ENCODE measurements at regions of chr6 and their contacts with region 1.

Region 1: DNA sequence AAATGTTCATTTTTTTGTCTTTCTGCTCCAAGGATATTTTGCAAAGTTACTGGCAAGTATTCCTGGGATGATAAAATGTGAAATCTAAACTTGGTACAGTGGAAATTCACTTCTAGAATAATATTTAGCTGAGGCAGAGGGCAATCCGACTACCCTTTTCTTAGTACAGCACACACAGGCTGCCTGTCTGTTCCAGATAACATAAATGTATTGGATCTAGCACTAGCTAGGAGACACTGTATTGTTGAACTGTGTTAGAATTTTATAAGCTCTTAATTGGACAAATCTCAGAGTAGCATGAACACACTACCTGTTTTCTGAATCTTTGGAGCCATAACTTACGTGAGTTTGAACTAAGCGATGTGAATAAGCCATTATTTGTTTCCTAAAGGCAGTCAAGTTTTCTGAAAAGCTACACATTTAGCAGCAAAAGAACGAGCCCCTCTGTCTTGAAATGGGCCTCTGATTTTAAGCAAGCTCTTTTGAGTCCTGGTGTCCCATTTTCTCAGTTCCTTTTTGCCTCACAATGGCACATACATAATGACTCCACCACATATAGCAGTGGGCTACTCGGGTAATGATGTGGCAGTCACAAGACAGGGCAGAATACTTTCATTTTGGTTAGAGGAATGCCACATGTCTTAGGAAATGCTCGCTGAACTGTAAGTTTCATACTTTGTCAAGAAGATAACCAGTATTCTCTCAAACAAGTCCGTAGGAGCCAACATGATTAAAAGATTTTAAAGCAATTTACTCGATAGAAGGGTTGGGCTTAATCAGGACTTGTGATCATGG is 116.5 kb upstream of the ESR1 start:
- DNase-seq: peak in 4 of 5 donors; percentile 33 to 48 (median 36)
- H3K4me3 ChIP-seq: peak overlapping the region; percentile 24 to 46
- H3K4me3 Mint-ChIP-seq: peak overlapping the region; percentile 74 to 89 (median 86)
- H3K27ac ChIP-seq: peak overlapping the region; percentile 37
- H3K27ac Mint-ChIP-seq: peak overlapping the region; percentile 76 to 90 (median 81)
- H3K4me1 ChIP-seq: peaks cover 11% of the 10 kb centered on the region
- H3K4me1 Mint-ChIP-seq: peaks cover 9 to 27% (median 24%) of the 10 kb centered on the region in 4 donors
- H3K27me3 ChIP-seq: no peaks in the 10 kb centered on the region
- H3K27me3 Mint-ChIP-seq: no peaks in the 10 kb centered on the region

Region 2: GRCh38 chr6:151647976-151648639 is 42.9 kb before region 1 on chr6:
- CTCF ChIA-PET with region 1: no interaction called
- POLR2A ChIA-PET with region 1: no interaction called
- intact Hi-C with region 1: no loop called
- DNase-seq: no peak
- H3K4me3 ChIP-seq: no peak overlapping the region
- H3K4me3 Mint-ChIP-seq: no peak overlapping the region
- H3K27ac ChIP-seq: no peak overlapping the region
- H3K27ac Mint-ChIP-seq: no peak overlapping the region
- H3K4me1 ChIP-seq: no peaks in the 10 kb centered on the region
- H3K4me1 Mint-ChIP-seq: no peaks in the 10 kb centered on the region
- H3K27me3 ChIP-seq: no peaks in the 10 kb centered on the region
- H3K27me3 Mint-ChIP-seq: peaks cover 38 to 40% of the 10 kb centered on the region in 2 donors

Region 3: GRCh38 chr6:151702851-151703611 is 12.1 kb after region 1 on chr6:
- CTCF ChIA-PET with region 1: interaction called, 17 read pairs
- POLR2A ChIA-PET with region 1: interaction called, 14 read pairs
- intact Hi-C with region 1: no loop called
- DNase-seq: no peak
- H3K4me3 ChIP-seq: no peak overlapping the region
- H3K4me3 Mint-ChIP-seq: peak overlapping the region in 6 of 8 donors; percentile 4 to 49 (median 31)
- H3K27ac ChIP-seq: no peak overlapping the region
- H3K27ac Mint-ChIP-seq: peak overlapping the region; percentile 33 to 83 (median 58)
- H3K4me1 ChIP-seq: peaks cover 28% of the 10 kb centered on the region
- H3K4me1 Mint-ChIP-seq: peaks cover 21 to 36% (median 29%) of the 10 kb centered on the region in 4 donors
- H3K27me3 ChIP-seq: no peaks in the 10 kb centered on the region
- H3K27me3 Mint-ChIP-seq: no peaks in the 10 kb centered on the region

Region 4: GRCh38 chr6:151757506-151758245 is 66.7 kb after region 1 on chr6:
- CTCF ChIA-PET with region 1: interaction called, 3 read pairs
- POLR2A ChIA-PET with region 1: no interaction called
- intact Hi-C with region 1: loop called (anchors 2 kb)
- DNase-seq: peak in 3 of 5 donors; percentile 3 to 24 (median 13)
- H3K4me3 ChIP-seq: no peak overlapping the region
- H3K4me3 Mint-ChIP-seq: peak overlapping the region in 6 of 8 donors; percentile 15 to 75 (median 32)
- H3K27ac ChIP-seq: peak overlapping the region; percentile 45
- H3K27ac Mint-ChIP-seq: peak overlapping the region; percentile 48 to 90 (median 78)
- H3K4me1 ChIP-seq: peaks cover 20% of the 10 kb centered on the region
- H3K4me1 Mint-ChIP-seq: peaks cover 14 to 36% (median 23%) of the 10 kb centered on the region in 4 donors
- H3K27me3 ChIP-seq: no peaks in the 10 kb centered on the region
- H3K27me3 Mint-ChIP-seq: no peaks in the 10 kb centered on the region

Region 5: GRCh38 chr6:152124429-152125074 is 433.6 kb after region 1 on chr6:
- CTCF ChIA-PET with region 1: interaction called, 54 read pairs
- POLR2A ChIA-PET with region 1: interaction called, 4 read pairs
- intact Hi-C with region 1: loop called (anchors 1 kb)
- DNase-seq: peak in 4 of 5 donors; percentile 18 to 35 (median 29)
- H3K4me3 ChIP-seq: no peak overlapping the region
- H3K4me3 Mint-ChIP-seq: no peak overlapping the region
- H3K27ac ChIP-seq: no peak overlapping the region
- H3K27ac Mint-ChIP-seq: peak overlapping the region in 4 of 7 donors; percentile 22 to 67 (median 52)
- H3K4me1 ChIP-seq: no peaks in the 10 kb centered on the region
- H3K4me1 Mint-ChIP-seq: peaks cover 0 to 2% (median 0%) of the 10 kb centered on the region in 4 donors
- H3K27me3 ChIP-seq: no peaks in the 10 kb centered on the region
- H3K27me3 Mint-ChIP-seq: no peaks in the 10 kb centered on the region

Region 6: DNA sequence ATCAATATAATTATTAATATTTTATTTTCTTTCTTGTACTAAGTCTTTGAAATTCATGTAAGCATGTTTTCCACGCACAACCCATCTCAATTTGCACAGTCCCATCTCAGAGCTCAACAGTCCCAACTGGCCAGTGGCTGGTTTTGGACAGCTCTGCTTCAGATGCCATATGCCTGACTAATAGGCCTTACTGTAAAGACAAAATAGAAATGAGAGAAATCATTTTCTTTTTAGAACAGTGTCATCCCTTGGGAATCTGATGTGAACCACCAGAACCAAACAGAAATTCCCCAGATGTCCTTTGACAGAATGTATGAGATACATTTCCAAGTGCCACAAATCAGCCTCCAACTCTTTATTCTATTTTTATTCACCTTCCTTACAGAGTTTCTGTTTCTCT is 455.4 kb after region 1 on chr6:
- CTCF ChIA-PET with region 1: no interaction called
- POLR2A ChIA-PET with region 1: no interaction called
- intact Hi-C with region 1: no loop called
- DNase-seq: no peak
- H3K4me3 ChIP-seq: no peak overlapping the region
- H3K4me3 Mint-ChIP-seq: no peak overlapping the region
- H3K27ac ChIP-seq: no peak overlapping the region
- H3K27ac Mint-ChIP-seq: peak overlapping the region in 1 of 7 donors; percentile 47
- H3K4me1 ChIP-seq: no peaks in the 10 kb centered on the region
- H3K4me1 Mint-ChIP-seq: peaks cover 0 to 11% (median 3%) of the 10 kb centered on the region in 4 donors
- H3K27me3 ChIP-seq: no peaks in the 10 kb centered on the region
- H3K27me3 Mint-ChIP-seq: no peaks in the 10 kb centered on the region

Measured in CD4-positive, alpha-beta memory T cell (primary cell).